ENCODE measurements at regions of chr6 and their contacts with region 1.

Region 1: DNA sequence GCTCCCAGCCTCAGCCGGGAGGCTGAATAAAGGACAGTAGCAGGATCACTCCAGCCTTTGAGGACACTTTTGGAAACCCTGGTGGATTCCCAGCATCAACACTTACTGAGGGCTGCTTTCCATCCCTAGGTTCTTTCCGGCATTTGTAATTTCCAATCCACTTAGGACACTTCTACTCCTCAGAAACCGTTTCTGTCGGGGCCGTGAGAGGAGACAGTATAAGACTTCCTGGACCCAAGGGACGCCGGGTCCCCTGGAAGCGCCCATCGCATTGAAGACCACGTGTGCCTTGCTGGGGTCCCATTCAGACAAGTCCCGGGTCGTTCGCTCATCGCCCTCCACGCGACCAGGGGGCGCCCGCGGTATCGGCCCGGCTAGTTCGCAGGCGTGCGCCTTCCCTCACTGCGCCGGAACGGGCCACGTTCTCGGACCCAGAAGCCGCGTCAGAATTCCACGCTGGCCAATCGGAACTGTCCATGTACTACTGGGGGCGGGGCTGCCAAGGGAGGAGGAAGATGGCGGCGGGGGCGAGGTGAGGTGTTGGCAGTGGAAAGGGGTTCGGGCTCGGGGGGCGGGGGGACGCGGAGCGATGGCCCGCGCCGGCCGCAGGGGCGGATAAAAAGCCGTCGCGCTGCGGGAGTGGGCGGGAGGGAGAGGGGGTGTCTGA is at the start of gene NUS1:
- DNase-seq: peak; percentile 92 to 98 (median 96)
- ATAC-seq: peak; percentile 98
- H3K4me3 ChIP-seq: peak within 1 kb of the TSS; percentile 95
- H3K4me3 Mint-ChIP-seq: peak within 1 kb of the TSS; percentile 85 to 98 (median 94)
- H3K27ac ChIP-seq: peak within 1 kb of the TSS; percentile 74
- H3K27ac Mint-ChIP-seq: peak within 1 kb of the TSS; percentile 81 to 98 (median 91)
- H3K4me1 ChIP-seq: peaks cover 24 to 28% of the 10 kb centered on the region in 2 donors
- H3K4me1 Mint-ChIP-seq: peaks cover 37 to 57% (median 53%) of the 10 kb centered on the region in 7 donors
- H3K27me3 ChIP-seq: no peaks in the 10 kb centered on the region
- H3K27me3 Mint-ChIP-seq: peaks cover 0 to 2% (median 0%) of the 10 kb centered on the region in 5 donors
- total RNA-seq, gene NUS1: 19.6 to 37.6 (median 33.2) TPM

Region 2: DNA sequence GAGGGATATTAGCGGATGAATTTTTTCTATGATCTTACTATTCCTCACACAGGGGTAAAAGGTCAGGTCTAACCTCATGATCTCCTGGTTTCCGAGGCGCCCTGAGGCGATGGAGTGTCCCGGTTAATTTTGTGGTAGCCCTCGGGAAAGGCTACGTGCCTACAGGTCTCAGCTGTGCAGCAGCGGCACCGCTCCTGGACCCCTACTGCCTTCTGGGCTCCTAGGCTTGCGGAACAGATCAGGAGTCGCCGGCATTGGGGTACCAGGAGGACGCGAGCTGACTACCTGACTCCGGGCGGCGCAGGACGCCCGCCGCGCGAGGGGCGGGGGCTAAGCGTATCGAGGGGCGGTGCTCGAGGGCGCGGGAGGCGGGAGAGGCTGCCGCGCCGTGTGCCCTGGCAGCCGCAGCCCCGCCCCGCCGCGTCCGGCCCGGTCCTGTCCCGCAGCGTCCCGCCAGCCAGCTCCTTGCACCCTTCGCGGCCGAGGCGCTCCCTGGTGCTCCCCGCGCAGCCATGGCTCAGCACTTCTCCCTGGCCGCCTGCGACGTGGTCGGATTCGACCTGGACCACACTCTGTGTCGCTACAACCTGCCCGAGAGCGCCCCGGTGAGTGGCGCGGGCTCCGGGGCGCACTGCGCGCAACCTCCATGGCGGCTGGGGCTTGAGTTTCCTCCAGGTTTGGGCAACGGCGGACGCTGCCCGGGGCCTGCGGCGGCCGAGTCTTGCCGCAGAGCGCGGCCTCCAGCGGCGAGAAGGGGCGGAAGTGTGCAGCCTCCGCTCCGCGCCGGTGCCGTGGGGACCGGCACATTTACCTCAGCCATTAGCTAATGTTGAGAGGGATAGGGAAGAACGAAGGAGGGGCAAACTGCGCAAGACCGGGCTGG is 1574.5 kb before region 1 on chr6 and contains the start of gene NT5DC1:
- CTCF ChIA-PET with region 1: no interaction called
- POLR2A ChIA-PET with region 1: no interaction called
- intact Hi-C with region 1: loop called in 1 of 2 experiments (anchors 5 kb)
- DNase-seq: peak; percentile 76 to 90 (median 82)
- ATAC-seq: peak; percentile 94
- H3K4me3 ChIP-seq: peak within 1 kb of the TSS; percentile 77
- H3K4me3 Mint-ChIP-seq: peak within 1 kb of the TSS; percentile 89 to 99 (median 96)
- H3K27ac ChIP-seq: peak within 1 kb of the TSS; percentile 79
- H3K27ac Mint-ChIP-seq: peak within 1 kb of the TSS; percentile 85 to 96 (median 92)
- H3K4me1 ChIP-seq: peaks cover 25 to 32% of the 10 kb centered on the region in 2 donors
- H3K4me1 Mint-ChIP-seq: peaks cover 32 to 64% (median 57%) of the 10 kb centered on the region in 7 donors
- H3K27me3 ChIP-seq: no peaks in the 10 kb centered on the region
- H3K27me3 Mint-ChIP-seq: no peaks in the 10 kb centered on the region
- total RNA-seq, gene NT5DC1: 30.5 to 52.6 (median 39.7) TPM

Region 3: DNA sequence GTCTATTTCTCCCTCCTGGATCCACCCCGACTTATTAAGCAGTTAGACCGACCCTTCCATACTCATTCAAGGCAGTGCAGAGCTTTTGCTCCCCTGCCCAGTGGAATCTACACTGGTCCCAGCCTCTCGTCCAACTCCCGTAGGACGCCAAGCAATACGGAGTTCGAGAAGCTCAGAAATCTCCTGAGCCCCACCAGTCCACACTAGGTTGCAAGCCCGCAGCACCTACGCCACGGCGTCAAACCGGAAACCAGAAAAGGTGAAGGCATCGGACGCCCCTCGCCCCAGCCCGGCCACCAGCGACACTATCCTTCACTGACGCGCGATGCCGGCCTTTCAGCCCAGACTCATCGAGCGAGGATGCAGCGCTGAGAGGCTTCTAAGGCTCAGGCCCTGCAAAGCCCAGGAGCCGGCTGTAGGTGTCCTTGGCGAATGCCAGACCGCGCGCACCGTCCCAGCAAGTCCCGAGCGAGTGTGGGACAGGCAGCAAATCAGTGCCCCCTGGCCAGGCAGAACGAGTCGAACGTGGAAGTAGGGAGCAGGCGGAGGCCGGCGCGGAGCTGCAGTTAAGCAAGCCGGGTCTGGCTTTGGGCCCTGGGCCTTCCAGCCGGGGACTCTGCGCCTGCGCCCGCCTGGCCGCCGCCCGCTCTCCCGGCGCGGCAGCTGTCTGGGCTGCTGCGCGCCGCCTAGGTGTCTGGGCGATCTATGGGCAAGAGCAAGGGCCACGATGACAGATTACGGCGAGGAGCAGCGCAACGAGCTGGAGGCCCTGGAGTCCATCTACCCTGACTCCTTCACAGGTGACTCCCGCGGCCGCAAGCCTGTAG is 1104.1 kb before region 1 on chr6 and contains the start of gene RWDD1:
- CTCF ChIA-PET with region 1: no interaction called
- POLR2A ChIA-PET with region 1: no interaction called
- intact Hi-C with region 1: loop called in 1 of 2 experiments (anchors 1 kb)
- DNase-seq: peak; percentile 91 to 99 (median 98)
- ATAC-seq: peak; percentile 98
- H3K4me3 ChIP-seq: peak within 1 kb of the TSS; percentile 86
- H3K4me3 Mint-ChIP-seq: peak within 1 kb of the TSS; percentile 94 to 99 (median 98)
- H3K27ac ChIP-seq: peak within 1 kb of the TSS; percentile 95
- H3K27ac Mint-ChIP-seq: peak within 1 kb of the TSS; percentile 96 to 100 (median 99)
- H3K4me1 ChIP-seq: peaks cover 16 to 21% of the 10 kb centered on the region in 2 donors
- H3K4me1 Mint-ChIP-seq: peaks cover 33 to 62% (median 55%) of the 10 kb centered on the region in 7 donors
- H3K27me3 ChIP-seq: no peaks in the 10 kb centered on the region
- H3K27me3 Mint-ChIP-seq: peaks cover 0 to 11% (median 0%) of the 10 kb centered on the region in 5 donors
- total RNA-seq, gene RWDD1: 33.2 to 39.9 (median 36.7) TPM

Region 4: DNA sequence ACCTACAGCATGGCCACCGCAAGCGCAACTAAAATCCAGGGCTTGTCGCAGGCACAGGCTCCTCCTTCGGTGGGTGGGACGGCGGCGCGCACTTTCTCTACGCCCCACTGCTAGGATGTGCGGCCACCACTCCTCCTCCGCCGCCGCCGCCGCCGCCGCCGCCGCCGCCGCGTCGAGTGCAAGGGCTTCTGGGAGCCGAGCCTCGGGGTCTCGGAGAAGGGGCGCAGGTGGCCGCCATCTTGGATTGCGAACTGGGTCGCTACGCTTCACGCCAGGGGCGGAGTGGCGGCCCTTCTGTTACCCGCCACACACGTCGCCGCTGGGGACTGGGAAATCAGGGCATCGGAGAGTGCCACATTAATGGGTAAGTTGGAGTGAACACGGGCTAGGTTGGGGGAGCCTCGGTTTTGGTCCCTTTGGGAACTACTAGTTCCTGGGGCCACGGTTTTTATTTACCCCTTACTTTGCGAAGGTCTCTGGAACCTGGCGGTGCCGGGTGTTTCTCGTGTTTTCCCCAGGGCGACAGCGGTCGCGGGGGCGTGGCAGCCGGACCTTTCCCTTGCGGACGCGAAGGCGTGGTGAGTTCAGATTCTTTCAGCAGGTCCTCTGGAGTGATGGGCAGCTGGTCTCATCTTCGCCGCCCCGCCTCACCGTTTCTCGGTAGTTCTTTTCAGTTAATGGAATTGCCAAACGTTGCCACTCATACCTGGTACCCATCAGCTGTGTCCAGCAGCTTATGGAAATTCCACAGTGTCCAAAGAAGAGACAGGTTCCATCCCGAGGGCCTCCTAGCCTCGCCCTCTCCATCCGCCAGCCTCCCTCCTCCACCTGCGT is 993.9 kb before region 1 on chr6 and contains the start of gene KPNA5:
- CTCF ChIA-PET with region 1: no interaction called
- POLR2A ChIA-PET with region 1: no interaction called
- intact Hi-C with region 1: loop called in 1 of 2 experiments (anchors 5 kb)
- DNase-seq: peak; percentile 82 to 91 (median 89)
- ATAC-seq: peak; percentile 97
- H3K4me3 ChIP-seq: peak within 1 kb of the TSS; percentile 88
- H3K4me3 Mint-ChIP-seq: peak within 1 kb of the TSS; percentile 94 to 99 (median 98)
- H3K27ac ChIP-seq: peak within 1 kb of the TSS; percentile 85
- H3K27ac Mint-ChIP-seq: peak within 1 kb of the TSS; percentile 96 to 99 (median 97)
- H3K4me1 ChIP-seq: peaks cover 0 to 13% of the 10 kb centered on the region in 2 donors
- H3K4me1 Mint-ChIP-seq: peaks cover 19 to 71% (median 46%) of the 10 kb centered on the region in 7 donors
- H3K27me3 ChIP-seq: no peaks in the 10 kb centered on the region
- H3K27me3 Mint-ChIP-seq: no peaks in the 10 kb centered on the region
- total RNA-seq, gene KPNA5: 11.0 to 78.2 (median 53.2) TPM

Region 5: GRCh38 chr6:117482240-117483003 is 192.7 kb before region 1 on chr6 and contains the start of gene DCBLD1:
- CTCF ChIA-PET with region 1: no interaction called
- POLR2A ChIA-PET with region 1: no interaction called
- intact Hi-C with region 1: loop called (anchors 1 kb)
- DNase-seq: peak in 8 of 9 donors; percentile 32 to 72 (median 36)
- ATAC-seq: peak; percentile 85
- H3K4me3 ChIP-seq: peak within 1 kb of the TSS; percentile 63
- H3K4me3 Mint-ChIP-seq: peak within 1 kb of the TSS; percentile 87 to 96 (median 91)
- H3K27ac ChIP-seq: no peak within 1 kb of the TSS
- H3K27ac Mint-ChIP-seq: peak within 1 kb of the TSS in 7 of 9 donors; percentile 28 to 84 (median 65)
- H3K4me1 ChIP-seq: peaks cover 8 to 10% of the 10 kb centered on the region in 2 donors
- H3K4me1 Mint-ChIP-seq: peaks cover 15 to 18% (median 16%) of the 10 kb centered on the region in 7 donors
- H3K27me3 ChIP-seq: no peaks in the 10 kb centered on the region
- H3K27me3 Mint-ChIP-seq: peaks cover 45 to 66% (median 53%) of the 10 kb centered on the region in 5 donors
- total RNA-seq, gene DCBLD1: 1.5 to 7.6 (median 5.6) TPM

Region 6: DNA sequence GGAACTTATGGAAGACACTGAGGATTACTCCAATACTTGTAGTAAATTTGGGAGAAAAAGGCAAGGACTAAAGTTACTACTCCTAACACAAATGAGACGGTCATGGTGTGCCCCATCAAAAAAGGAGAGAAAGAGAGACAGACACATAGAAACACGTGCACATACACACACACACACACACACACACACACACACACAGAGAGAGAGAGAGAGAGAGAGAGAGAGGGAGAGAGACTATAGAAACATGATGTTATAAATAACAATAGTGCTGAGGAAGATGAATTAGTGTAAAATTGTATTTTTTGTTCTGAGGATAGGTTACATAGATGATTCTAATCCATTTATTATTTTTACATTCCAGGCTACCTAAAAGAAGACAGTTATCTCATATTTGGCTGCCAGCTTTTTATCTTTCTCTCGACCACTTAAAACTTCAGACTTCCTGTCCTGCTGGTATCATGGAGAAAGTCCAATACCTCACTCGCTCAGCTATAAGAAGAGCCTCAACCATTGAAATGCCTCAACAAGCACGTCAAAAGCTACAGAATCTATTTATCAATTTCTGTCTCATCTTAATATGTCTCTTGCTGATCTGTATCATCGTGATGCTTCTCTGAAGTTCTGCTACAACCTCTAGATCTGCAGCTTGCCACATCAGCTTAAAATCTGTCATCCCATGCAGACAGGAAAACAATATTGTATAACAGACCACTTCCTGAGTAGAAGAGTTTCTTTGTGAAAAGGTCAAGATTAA is 883.5 kb after region 1 on chr6:
- CTCF ChIA-PET with region 1: no interaction called
- POLR2A ChIA-PET with region 1: no interaction called
- intact Hi-C with region 1: loop called in 1 of 2 experiments (anchors 5 kb)
- DNase-seq: peak in 7 of 9 donors; percentile 58 to 81 (median 72)
- ATAC-seq: peak; percentile 95
- H3K4me3 ChIP-seq: peak overlapping the region; percentile 15
- H3K4me3 Mint-ChIP-seq: peak overlapping the region; percentile 39 to 90 (median 81)
- H3K27ac ChIP-seq: peak overlapping the region; percentile 74
- H3K27ac Mint-ChIP-seq: peak overlapping the region; percentile 93 to 99 (median 96)
- H3K4me1 ChIP-seq: peaks cover 19 to 25% of the 10 kb centered on the region in 2 donors
- H3K4me1 Mint-ChIP-seq: peaks cover 17 to 71% (median 50%) of the 10 kb centered on the region in 7 donors
- H3K27me3 ChIP-seq: no peaks in the 10 kb centered on the region
- H3K27me3 Mint-ChIP-seq: peaks cover 0 to 2% (median 0%) of the 10 kb centered on the region in 5 donors

Region 7: DNA sequence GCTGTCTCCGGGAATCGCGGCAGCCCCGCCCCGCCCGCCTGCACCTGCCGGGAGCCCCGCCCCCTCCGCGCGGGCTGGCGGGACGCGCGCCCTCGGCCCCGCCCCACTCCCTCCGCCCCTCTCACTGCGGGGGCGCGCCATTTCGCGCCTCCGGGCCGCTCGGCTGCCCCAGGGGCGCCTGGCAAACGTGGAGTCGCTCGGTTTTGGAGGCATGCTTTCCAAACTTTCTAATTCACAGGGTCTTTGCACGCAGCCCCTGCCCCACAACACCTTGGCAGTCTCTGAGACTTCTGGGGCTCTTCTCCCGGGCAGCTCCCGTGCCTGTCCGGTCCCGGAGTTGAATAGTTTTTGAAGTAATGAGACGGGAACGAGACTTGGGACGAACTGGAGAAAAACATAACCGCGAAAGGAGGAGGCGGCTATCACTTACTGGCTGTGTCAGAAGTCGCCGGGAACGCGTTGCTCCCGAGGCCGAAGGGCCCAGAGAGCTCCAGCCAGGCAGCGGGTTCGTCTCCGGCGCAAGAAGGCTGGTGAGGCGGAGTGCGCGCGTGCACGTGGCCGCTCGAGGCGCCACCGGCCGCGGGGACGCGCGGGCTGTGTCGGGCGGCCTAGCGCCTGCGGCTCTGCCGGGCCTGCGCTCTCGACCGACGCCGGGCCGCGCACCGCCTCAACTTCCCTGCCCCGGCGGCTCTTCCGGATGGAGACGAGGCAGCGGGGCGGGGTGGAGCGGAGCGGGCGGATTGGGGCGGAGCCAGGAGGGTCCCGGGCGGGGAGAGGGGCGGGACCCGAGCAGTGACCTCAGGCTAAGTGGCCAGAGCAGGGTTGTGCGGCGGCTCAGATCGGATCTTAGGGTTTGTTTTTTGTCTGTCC is 1259.6 kb after region 1 on chr6 and contains the start of gene MCM9:
- CTCF ChIA-PET with region 1: no interaction called
- POLR2A ChIA-PET with region 1: no interaction called
- intact Hi-C with region 1: loop called in 1 of 2 experiments (anchors 10 kb)
- DNase-seq: peak; percentile 77 to 93 (median 86)
- ATAC-seq: peak; percentile 92
- H3K4me3 ChIP-seq: peak within 1 kb of the TSS; percentile 98
- H3K4me3 Mint-ChIP-seq: peak within 1 kb of the TSS; percentile 86 to 96 (median 91)
- H3K27ac ChIP-seq: peak within 1 kb of the TSS; percentile 95
- H3K27ac Mint-ChIP-seq: peak within 1 kb of the TSS; percentile 86 to 95 (median 93)
- H3K4me1 ChIP-seq: peaks cover 4 to 8% of the 10 kb centered on the region in 2 donors
- H3K4me1 Mint-ChIP-seq: peaks cover 22 to 47% (median 41%) of the 10 kb centered on the region in 7 donors
- H3K27me3 ChIP-seq: no peaks in the 10 kb centered on the region
- H3K27me3 Mint-ChIP-seq: no peaks in the 10 kb centered on the region
- total RNA-seq, gene MCM9: 21.8 to 33.7 (median 31.1) TPM

Measured in naive thymus-derived CD4-positive, alpha-beta T cell (primary cell).